Calu3 (cell line): ENCODE measurements at regions of chr12 and their contacts with region 1.

Region 1: GRCh38 chr12:63802012-63802608 is 22.4 kb downstream of the RXYLT1 start:
- DNase-seq: no peak
- H3K4me3 Mint-ChIP-seq: no peak overlapping the region
- H3K27ac Mint-ChIP-seq: no peak overlapping the region
- H3K4me1 Mint-ChIP-seq: no peaks in the 10 kb centered on the region
- H3K27me3 Mint-ChIP-seq: no peaks in the 10 kb centered on the region
- CTCF ChIP-seq: peak; percentile 46

Region 2: DNA sequence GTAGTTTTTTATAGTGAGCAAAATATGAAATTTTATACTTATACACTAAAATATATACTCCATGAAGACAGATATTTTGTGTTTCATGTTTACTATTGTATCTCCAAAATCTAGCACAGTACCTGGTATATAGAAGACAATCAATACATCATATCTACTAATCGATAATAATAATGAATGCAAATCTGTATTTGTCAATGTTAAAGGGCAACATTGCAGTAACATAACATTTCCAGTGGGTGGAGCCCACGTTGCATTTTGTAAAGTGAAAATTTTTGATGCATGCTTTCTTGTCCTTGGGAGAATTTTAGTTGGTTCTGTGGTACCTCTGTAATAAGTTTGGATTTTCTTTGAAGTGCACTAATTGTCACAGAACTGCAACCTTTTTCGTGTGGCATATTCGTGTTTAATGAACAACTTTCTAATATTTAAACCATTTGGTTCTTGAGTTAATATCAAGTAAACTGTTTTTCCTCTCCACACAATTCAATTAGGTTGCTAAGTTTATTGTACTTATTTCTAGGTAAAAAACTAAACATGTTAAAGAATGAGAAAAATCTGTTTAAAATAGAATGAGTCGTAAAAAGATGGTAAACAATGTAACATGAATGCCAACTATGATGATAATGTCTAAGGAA is 698.5 kb before region 1 on chr12:
- CTCF ChIA-PET with region 1: no interaction called
- intact Hi-C with region 1: loop called (anchors 1 kb)
- DNase-seq: peak; percentile 34
- H3K4me3 Mint-ChIP-seq: no peak overlapping the region
- H3K27ac Mint-ChIP-seq: no peak overlapping the region
- H3K4me1 Mint-ChIP-seq: peaks cover 7% of the 10 kb centered on the region
- H3K27me3 Mint-ChIP-seq: no peaks in the 10 kb centered on the region
- CTCF ChIP-seq: peak; percentile 79

Region 3: DNA sequence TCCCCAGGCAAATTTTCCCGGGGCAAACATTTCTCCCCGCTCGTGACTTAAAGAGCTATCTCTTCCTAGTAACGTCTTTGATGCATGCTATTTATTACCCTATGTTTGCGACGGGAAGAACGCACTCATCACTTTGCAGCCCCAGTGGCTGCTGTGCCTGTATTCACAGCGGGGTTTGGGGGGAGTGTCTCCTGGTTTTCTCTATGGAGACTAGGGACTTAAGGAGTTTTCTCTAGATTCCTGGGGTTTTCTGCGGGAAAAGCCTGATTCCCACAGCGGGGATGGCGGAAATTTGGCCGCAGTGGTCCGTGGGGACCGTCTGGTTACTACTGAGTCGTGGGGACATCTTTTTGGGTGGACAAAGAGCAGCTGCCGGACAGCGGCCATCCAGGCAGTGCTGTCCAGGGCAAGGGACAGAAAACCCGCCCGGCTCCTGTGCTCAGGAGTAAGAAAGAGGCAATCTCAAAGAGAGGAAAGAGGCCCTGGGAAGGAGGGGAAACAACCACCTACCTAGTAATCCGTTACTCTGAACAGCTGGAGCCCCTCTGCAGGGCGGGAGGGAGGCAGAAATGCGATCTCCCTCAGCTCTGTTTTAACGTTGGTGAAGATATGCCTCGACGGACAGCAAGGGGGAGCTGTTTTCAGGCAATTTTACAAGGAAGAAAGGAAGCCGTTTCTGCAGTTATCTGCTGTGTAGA is 650.3 kb before region 1 on chr12:
- CTCF ChIA-PET with region 1: no interaction called
- intact Hi-C with region 1: loop called (anchors 5 kb)
- DNase-seq: peak; percentile 68
- H3K4me3 Mint-ChIP-seq: peak overlapping the region; percentile 81
- H3K27ac Mint-ChIP-seq: peak overlapping the region; percentile 4
- H3K4me1 Mint-ChIP-seq: peaks cover 8% of the 10 kb centered on the region
- H3K27me3 Mint-ChIP-seq: no peaks in the 10 kb centered on the region
- CTCF ChIP-seq: peak; percentile 85

Region 4: DNA sequence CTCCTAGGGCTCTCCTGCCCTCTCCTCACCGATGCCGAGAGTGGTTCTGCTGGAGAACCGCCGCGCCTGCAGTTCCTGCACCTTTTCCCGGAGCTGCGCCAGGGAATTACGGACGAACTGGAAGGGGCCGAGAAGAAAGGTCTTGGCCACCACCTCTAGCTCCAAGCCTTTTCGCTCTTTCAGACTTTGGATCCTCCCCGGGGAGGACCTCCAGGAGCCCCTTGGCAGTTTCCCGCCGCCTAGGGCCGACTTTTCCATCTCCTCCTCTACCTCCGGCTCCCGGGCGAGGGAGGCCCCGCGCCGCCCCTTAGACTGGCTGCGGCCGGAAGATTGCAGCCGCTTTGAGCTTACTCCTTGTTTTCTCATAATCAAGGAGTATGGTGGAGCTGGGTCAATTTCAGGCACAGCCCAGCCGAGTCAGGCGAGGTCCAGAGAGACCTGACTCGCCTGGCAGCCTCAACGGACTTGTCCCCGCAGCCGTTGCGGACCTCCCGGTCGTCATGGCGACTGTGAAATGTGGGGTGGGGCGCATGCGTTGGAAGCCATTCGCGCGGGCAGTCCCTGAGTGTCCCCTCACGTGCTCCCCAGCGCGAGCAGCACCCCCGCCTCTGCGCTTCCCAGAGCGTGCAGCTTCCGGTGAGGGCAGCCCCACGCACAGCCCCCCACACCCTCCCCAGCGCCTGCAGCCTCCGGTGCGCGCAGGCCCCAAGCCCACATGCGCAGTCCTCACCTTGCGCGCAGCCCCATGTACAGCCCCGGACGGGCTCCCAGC is 133.9 kb before region 1 on chr12 and contains the start of gene DPY19L2:
- CTCF ChIA-PET with region 1: no interaction called
- intact Hi-C with region 1: loop called (anchors 5 kb)
- DNase-seq: peak; percentile 81
- H3K4me3 Mint-ChIP-seq: peak within 1 kb of the TSS; percentile 74
- H3K27ac Mint-ChIP-seq: peak within 1 kb of the TSS; percentile 61
- H3K4me1 Mint-ChIP-seq: peaks cover 26% of the 10 kb centered on the region
- H3K27me3 Mint-ChIP-seq: peaks cover 13% of the 10 kb centered on the region
- CTCF ChIP-seq: no peak
- total RNA-seq, gene DPY19L2: 9.2 and 10.1 TPM in 2 replicates

Region 5: GRCh38 chr12:64137117-64137516 is 335.0 kb after region 1 on chr12:
- CTCF ChIA-PET with region 1: no interaction called
- intact Hi-C with region 1: no loop called
- DNase-seq: no peak
- H3K4me3 Mint-ChIP-seq: no peak overlapping the region
- H3K27ac Mint-ChIP-seq: no peak overlapping the region
- H3K4me1 Mint-ChIP-seq: no peaks in the 10 kb centered on the region
- H3K27me3 Mint-ChIP-seq: no peaks in the 10 kb centered on the region
- CTCF ChIP-seq: no peak